Activated T-helper 2 cell treated with anti-CD3 and anti-CD28 coated beads, Interferon-gamma antibody, Interleukin-2, Interleukin-4, amounts not matched to agents 10 μg/mL and 5 μg/mL and 100 μg/mL, durations not matched to agents 14 hours and 24 hours and 36 hours (primary cell): ENCODE measurements at regions of chr4 and their contacts with region 1.

Region 1: GRCh38 chr4:120066517-120067340 is at the start of gene MAD2L1:
- DNase-seq: peak; percentile 97
- H3K4me3 Mint-ChIP-seq: peak within 1 kb of the TSS; percentile 98
- H3K27ac Mint-ChIP-seq: peak within 1 kb of the TSS; percentile 100
- H3K4me1 Mint-ChIP-seq: peaks cover 55% of the 10 kb centered on the region
- H3K27me3 Mint-ChIP-seq: no peaks in the 10 kb centered on the region
- total RNA-seq, gene MAD2L1: 68.7 and 70.8 TPM in 2 replicates

Region 2: DNA sequence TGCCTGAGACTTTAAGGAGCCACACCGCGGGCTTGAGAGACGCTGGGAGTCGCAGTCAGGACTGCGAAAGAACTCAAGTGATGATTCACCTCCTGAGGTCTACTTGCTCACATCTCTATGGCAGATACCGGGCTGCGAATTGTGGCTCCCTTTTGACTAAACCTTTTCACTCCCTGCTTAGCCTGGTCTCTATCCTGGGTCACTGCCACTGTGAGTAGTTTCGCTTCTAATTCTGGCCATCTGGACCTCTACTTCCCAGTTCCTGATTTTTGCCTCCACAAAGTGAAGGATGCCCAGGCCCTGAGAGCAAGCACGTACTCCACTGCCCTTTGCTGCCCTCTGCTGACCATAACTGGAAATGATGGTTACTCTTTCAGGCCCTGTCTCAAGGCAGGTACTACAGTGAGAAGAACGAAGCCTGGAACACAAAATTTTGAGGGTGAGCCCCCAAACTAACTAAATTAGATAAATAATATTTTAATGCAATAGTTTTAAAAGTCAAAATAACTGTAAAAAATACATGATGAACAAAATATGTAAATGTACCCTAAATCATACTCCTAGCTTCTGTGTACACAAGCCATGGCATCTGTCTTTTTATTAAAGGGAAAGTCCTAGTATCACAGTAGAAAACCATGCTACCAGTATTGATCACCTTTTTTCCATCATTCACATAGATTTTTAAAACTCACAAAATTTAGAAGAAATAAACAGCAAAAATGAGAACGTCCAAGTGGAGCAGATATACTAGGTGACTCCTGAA is 16.8 kb before region 1 on chr4:
- intact Hi-C with region 1: loop called (anchors 1 kb)
- DNase-seq: peak; percentile 55
- H3K4me3 Mint-ChIP-seq: no peak overlapping the region
- H3K27ac Mint-ChIP-seq: no peak overlapping the region
- H3K4me1 Mint-ChIP-seq: peaks cover 4% of the 10 kb centered on the region
- H3K27me3 Mint-ChIP-seq: no peaks in the 10 kb centered on the region

Region 3: GRCh38 chr4:120156120-120156718 is 89.5 kb after region 1 on chr4:
- intact Hi-C with region 1: loop called (anchors 5 kb)
- DNase-seq: no peak
- H3K4me3 Mint-ChIP-seq: no peak overlapping the region
- H3K27ac Mint-ChIP-seq: no peak overlapping the region
- H3K4me1 Mint-ChIP-seq: no peaks in the 10 kb centered on the region
- H3K27me3 Mint-ChIP-seq: peaks cover 7% of the 10 kb centered on the region

Region 4: GRCh38 chr4:121096629-121097028 is 1029.9 kb after region 1 on chr4:
- intact Hi-C with region 1: loop called (anchors 5 kb)
- DNase-seq: no peak
- H3K4me3 Mint-ChIP-seq: no peak overlapping the region
- H3K27ac Mint-ChIP-seq: no peak overlapping the region
- H3K4me1 Mint-ChIP-seq: no peaks in the 10 kb centered on the region
- H3K27me3 Mint-ChIP-seq: peaks cover 31% of the 10 kb centered on the region

Region 5: GRCh38 chr4:121139533-121140222 is 1072.9 kb after region 1 on chr4:
- intact Hi-C with region 1: loop called (anchors 1 kb)
- DNase-seq: no peak
- H3K4me3 Mint-ChIP-seq: no peak overlapping the region
- H3K27ac Mint-ChIP-seq: peak overlapping the region; percentile 58
- H3K4me1 Mint-ChIP-seq: peaks cover 47% of the 10 kb centered on the region
- H3K27me3 Mint-ChIP-seq: no peaks in the 10 kb centered on the region

Region 6: DNA sequence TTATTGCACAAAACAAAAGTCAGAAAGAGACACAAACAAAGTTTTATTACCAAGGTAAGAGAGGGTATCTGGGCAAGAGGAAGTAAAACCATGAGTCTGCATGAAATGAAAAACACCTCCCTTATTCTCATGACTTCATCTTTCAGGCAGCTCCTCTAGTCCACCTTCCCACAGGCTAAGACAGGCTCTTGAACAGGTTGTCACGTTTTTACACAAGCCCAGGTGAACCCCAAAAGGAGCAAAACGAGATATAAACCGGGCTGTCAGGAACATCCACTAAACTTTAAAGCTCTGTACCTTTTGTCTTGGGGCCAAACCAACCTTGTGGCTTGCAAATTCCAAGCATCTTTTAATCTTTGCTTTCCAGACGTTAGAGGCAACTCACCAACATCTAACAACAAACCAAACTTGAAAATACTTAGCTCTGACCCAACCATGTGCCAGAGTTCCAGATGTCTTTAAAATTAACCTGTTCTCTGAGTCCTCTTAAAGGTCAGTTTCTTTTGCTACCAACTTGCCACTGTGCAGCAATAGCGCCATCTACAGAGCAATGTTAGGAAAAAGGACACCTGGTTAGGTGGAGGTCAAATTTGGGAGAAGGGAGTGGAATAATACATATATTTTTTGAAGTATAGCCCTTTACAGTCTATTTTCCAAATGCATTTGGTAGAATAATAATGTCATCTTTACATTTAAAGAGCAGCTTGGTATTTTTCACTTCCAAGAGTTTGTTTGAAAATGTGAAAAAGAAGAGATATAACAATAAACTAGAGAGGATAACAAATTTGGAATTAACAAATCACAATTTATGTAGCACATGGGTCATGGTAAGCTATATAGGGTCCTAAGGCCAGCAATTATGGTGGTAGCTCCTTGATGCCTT is 1241.0 kb after region 1 on chr4:
- intact Hi-C with region 1: loop called (anchors 10 kb)
- DNase-seq: peak; percentile 31
- H3K4me3 Mint-ChIP-seq: no peak overlapping the region
- H3K27ac Mint-ChIP-seq: no peak overlapping the region
- H3K4me1 Mint-ChIP-seq: peaks cover 24% of the 10 kb centered on the region
- H3K27me3 Mint-ChIP-seq: peaks cover 20% of the 10 kb centered on the region

Region 7: DNA sequence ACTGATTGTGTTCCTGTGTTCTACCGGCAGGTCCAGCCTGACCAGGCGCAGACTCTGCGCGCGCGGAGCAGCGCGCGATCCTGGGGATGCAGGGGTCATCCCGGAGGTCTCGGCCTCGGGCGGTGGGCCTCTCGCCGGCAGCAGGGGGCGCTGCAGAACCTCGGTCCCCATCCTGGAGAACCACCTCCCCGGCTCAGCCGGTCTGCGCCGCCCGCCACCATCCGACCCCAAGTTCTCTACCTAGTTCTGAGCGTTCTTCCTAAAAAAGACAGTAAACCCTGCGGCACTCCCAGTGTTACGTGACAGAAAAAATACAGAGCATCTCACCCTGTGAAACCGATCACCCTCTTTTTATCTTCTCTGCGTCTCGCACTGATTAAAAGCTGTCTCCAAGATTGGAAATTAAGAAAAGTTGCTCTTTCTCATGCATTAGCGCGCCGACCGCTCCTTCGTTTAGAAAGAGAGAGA is 1883.5 kb after region 1 on chr4:
- intact Hi-C with region 1: loop called (anchors 5 kb)
- DNase-seq: peak; percentile 71
- H3K4me3 Mint-ChIP-seq: peak overlapping the region; percentile 82
- H3K27ac Mint-ChIP-seq: no peak overlapping the region
- H3K4me1 Mint-ChIP-seq: peaks cover 14% of the 10 kb centered on the region
- H3K27me3 Mint-ChIP-seq: peaks cover 63% of the 10 kb centered on the region